Right lobe of liver (tissue), 6 donors: ENCODE measurements at regions of chr17 and their contacts with region 1.

Region 1: GRCh38 chr17:65099941-65100315 is 37.2 kb upstream of the RGS9 start:
- DNase-seq: peak in 1 of 3 donors; percentile 45
- ATAC-seq: peak; percentile 2 to 47 (median 20)
- H3K4me3 ChIP-seq: peak overlapping the region; percentile 43 to 53 (median 53)
- H3K27ac ChIP-seq: peak overlapping the region; percentile 5 to 66 (median 38)
- H3K4me1 ChIP-seq: no peaks in the 10 kb centered on the region
- H3K27me3 ChIP-seq: no peaks in the 10 kb centered on the region
- CTCF ChIP-seq: no peak
- POLR2A ChIP-seq: no peak

Region 2: DNA sequence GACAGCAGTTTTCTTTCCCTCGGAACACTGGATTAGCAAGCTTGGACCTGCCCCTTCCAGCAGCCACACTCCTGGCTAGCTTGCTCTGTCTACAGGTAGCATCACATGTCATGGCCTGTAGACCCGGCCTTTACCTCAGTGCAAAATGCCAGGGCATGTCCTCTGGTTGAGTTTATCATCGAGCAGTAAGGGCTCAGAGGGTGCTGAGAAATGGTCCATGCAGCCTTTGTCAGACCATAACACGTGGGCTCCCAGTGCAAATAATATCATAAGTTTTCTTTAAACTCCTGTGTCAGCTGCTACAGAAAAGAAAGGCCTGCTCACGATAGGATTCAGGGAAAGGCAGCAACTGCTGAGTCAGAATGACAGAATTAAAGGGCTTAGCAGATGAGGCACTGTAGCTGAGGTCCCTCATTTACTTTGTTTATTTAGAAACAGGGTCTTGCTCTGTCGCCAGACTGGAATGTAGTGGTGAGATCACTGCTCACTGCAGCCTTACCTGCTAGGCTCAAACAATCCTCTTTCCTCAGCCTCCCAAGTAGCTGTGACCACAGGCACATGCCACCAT is 35.4 kb before region 1 on chr17:
- intact Hi-C with region 1: loop called in 1 of 2 experiments (anchors 5 kb)
- DNase-seq: no peak
- ATAC-seq: peak in 1 of 4 donors; percentile 40
- H3K4me3 ChIP-seq: no peak overlapping the region
- H3K27ac ChIP-seq: no peak overlapping the region
- H3K4me1 ChIP-seq: no peaks in the 10 kb centered on the region
- H3K27me3 ChIP-seq: no peaks in the 10 kb centered on the region
- CTCF ChIP-seq: no peak
- POLR2A ChIP-seq: no peak

Region 3: GRCh38 chr17:65254168-65254567 is 154.2 kb after region 1 on chr17:
- intact Hi-C with region 1: no loop called
- DNase-seq: no peak
- ATAC-seq: no peak
- H3K4me3 ChIP-seq: no peak overlapping the region
- H3K27ac ChIP-seq: no peak overlapping the region
- H3K4me1 ChIP-seq: no peaks in the 10 kb centered on the region
- H3K27me3 ChIP-seq: no peaks in the 10 kb centered on the region
- CTCF ChIP-seq: no peak
- POLR2A ChIP-seq: no peak